ENCODE measurements at regions of chr15 and their contacts with region 1.

Region 1: GRCh38 chr15:91032919-91033803 is 10.8 kb upstream of the VPS33B start:
- DNase-seq: peak; percentile 76
- ATAC-seq: peak; percentile 85
- H3K4me3 Mint-ChIP-seq: no peak overlapping the region
- H3K27ac Mint-ChIP-seq: no peak overlapping the region
- H3K4me1 Mint-ChIP-seq: peaks cover 6% of the 10 kb centered on the region
- H3K27me3 Mint-ChIP-seq: peaks cover 19% of the 10 kb centered on the region

Region 2: GRCh38 chr15:90921887-90922286 is 111.3 kb before region 1 on chr15:
- CTCF ChIA-PET with region 1: no interaction called
- DNase-seq: no peak
- ATAC-seq: no peak
- H3K4me3 Mint-ChIP-seq: no peak overlapping the region
- H3K27ac Mint-ChIP-seq: peak overlapping the region; percentile 89
- H3K4me1 Mint-ChIP-seq: peaks cover 43% of the 10 kb centered on the region
- H3K27me3 Mint-ChIP-seq: no peaks in the 10 kb centered on the region

Region 3: DNA sequence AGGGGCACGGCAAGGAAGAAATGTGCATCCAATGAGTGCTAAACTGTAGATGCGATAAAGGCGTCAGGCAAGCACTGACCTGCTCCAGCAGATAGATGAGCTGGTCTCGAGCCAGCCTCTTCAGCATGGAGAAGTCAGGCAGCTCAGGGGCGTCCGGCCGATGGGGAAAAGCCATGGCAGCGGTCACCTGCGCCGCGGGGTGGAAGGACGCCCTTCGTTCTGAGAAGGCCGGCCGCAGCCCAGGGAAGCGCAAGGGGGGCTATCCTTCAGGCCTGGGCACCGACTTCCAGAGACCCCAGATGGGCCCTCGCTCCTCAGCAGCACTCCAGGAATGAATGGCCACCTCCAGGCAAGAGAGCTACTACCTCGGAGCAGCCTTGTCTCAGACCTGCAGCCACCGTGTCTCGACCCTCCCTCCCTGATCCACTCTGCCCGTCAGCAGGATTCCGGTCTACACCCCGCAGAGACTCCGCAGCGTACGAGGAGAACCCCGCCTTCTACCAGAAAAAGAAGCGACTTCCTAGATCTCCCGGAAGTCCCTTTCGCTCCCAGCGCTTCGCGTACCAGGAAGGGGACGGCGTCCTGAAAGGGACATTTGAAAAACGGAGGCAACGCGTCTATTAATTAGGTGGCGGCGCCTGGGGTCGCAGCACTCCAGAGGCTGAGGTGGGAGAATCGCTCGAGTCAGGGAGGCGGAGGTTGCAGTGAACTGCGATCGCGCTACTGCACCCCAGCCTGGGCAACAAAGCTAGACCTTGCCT is 10.9 kb before region 1 on chr15 and contains the start of gene VPS33B:
- CTCF ChIA-PET with region 1: interaction called, 24 read pairs
- DNase-seq: peak; percentile 86
- ATAC-seq: peak; percentile 87
- H3K4me3 Mint-ChIP-seq: peak within 1 kb of the TSS; percentile 97
- H3K27ac Mint-ChIP-seq: peak within 1 kb of the TSS; percentile 85
- H3K4me1 Mint-ChIP-seq: peaks cover 39% of the 10 kb centered on the region
- H3K27me3 Mint-ChIP-seq: no peaks in the 10 kb centered on the region
- total RNA-seq, gene VPS33B: 19.5 to 24.1 TPM